CD8-positive, alpha-beta memory T cell (primary cell): ENCODE measurements at regions of chrX and their contacts with region 1.

Region 1: GRCh38 chrX:12946838-12947544 is 27.9 kb upstream of the TMSB4X start:
- DNase-seq: peak; percentile 49 to 79 (median 73)
- H3K4me3 ChIP-seq: peak overlapping the region; percentile 44
- H3K4me3 Mint-ChIP-seq: peak overlapping the region in 6 of 7 donors; percentile 10 to 83 (median 72)
- H3K27ac ChIP-seq: peak overlapping the region; percentile 16
- H3K27ac Mint-ChIP-seq: peak overlapping the region; percentile 82 to 98 (median 95)
- H3K4me1 ChIP-seq: peaks cover 50% of the 10 kb centered on the region
- H3K4me1 Mint-ChIP-seq: peaks cover 53 to 60% (median 56%) of the 10 kb centered on the region in 3 donors
- H3K27me3 ChIP-seq: no peaks in the 10 kb centered on the region
- H3K27me3 Mint-ChIP-seq: peaks cover 0 to 13% of the 10 kb centered on the region in 2 donors

Region 2: DNA sequence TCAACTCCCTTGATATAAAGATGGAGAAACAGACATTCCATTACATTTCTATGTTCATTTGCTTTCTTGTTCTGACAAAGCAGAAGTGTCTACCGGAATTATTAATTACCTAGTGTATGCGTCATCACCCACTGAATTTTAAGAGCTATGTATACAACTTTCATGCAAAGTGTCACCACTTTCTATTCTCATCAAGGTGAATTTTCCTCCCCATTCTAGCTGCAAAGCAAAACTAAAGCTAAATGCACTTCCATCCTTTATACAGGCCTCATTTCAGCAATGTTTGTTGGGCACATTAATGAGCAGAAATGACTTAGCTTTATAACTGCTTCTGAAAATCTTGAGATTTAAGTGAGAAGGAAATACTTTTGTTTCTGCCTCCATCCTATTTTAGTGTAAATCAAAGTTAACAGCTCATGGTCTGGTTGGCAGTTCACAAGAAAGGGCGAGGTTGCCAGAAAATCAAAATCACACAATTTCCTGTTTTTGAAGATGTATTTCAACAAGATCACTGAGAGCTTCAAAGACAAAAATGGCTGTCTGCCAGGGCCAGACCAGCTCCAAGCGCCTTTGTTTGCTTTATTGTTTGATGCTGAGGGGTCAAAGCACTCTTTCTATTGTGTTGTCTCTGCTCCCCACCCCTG is 104.7 kb after region 1 on chrX:
- CTCF ChIA-PET with region 1: interaction called, 10 read pairs
- POLR2A ChIA-PET with region 1: interaction called, 4 read pairs
- DNase-seq: peak in 3 of 5 donors; percentile 46 to 78 (median 58)
- H3K4me3 ChIP-seq: no peak overlapping the region
- H3K4me3 Mint-ChIP-seq: peak overlapping the region; percentile 8 to 69 (median 51)
- H3K27ac ChIP-seq: peak overlapping the region; percentile 21
- H3K27ac Mint-ChIP-seq: peak overlapping the region; percentile 61 to 97 (median 90)
- H3K4me1 ChIP-seq: peaks cover 84% of the 10 kb centered on the region
- H3K4me1 Mint-ChIP-seq: peaks cover 61 to 84% (median 83%) of the 10 kb centered on the region in 3 donors
- H3K27me3 ChIP-seq: no peaks in the 10 kb centered on the region
- H3K27me3 Mint-ChIP-seq: peaks cover 0 to 7% of the 10 kb centered on the region in 2 donors

Region 3: DNA sequence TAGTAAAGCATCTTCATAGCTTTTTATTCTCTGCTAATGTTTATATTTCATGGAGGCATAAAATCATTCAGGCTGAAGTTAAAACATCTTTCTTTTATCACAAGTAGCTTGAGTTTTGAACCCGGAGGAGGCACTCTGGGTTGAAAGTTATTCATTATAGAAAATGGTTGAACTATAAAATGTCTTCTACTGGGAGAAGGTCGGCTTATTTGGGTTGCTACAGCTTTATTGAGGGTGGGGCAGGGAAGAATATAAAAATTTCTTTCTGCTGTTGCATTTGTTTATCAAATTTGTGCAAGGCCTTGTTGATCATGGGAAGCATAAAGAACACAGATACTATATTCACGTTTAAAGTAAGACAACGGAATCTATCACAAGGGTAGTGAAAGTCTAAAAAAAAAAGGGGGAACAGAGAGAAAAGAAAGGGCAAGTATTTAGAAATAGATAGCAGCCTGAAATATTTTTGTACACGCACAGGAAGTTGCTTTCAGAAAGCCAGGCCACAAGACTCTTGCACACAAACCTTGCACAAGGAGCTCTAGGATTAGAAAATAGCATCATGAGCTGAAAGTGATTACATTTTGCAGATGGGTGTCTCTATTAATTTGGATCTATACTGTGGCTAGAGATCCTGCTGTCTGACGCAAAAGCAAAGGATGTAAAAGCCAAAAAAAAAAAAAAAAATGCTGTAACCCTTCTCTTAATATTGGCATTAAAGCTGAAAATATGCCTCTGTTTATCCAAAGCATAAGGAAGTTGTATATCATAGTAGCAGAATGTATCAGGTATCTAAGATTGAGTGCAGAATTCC is 134.6 kb after region 1 on chrX:
- CTCF ChIA-PET with region 1: interaction called, 33 read pairs
- POLR2A ChIA-PET with region 1: interaction called, 5 read pairs
- DNase-seq: peak in 2 of 5 donors; percentile 47
- H3K4me3 ChIP-seq: peak overlapping the region; percentile 5
- H3K4me3 Mint-ChIP-seq: peak overlapping the region; percentile 46 to 74 (median 68)
- H3K27ac ChIP-seq: no peak overlapping the region
- H3K27ac Mint-ChIP-seq: peak overlapping the region; percentile 88 to 98 (median 92)
- H3K4me1 ChIP-seq: peaks cover 98% of the 10 kb centered on the region
- H3K4me1 Mint-ChIP-seq: peaks cover 78 to 95% (median 94%) of the 10 kb centered on the region in 3 donors
- H3K27me3 ChIP-seq: no peaks in the 10 kb centered on the region
- H3K27me3 Mint-ChIP-seq: peaks cover 0 to 28% of the 10 kb centered on the region in 2 donors

Region 4: GRCh38 chrX:13487731-13488523 is 540.9 kb after region 1 on chrX:
- CTCF ChIA-PET with region 1: interaction called, 58 read pairs
- POLR2A ChIA-PET with region 1: interaction called, 10 read pairs
- DNase-seq: peak in 4 of 5 donors; percentile 1 to 52 (median 46)
- H3K4me3 ChIP-seq: no peak overlapping the region
- H3K4me3 Mint-ChIP-seq: peak overlapping the region in 3 of 7 donors; percentile 8 to 31 (median 17)
- H3K27ac ChIP-seq: no peak overlapping the region
- H3K27ac Mint-ChIP-seq: peak overlapping the region in 7 of 8 donors; percentile 50 to 87 (median 79)
- H3K4me1 ChIP-seq: peaks cover 22% of the 10 kb centered on the region
- H3K4me1 Mint-ChIP-seq: peaks cover 38 to 51% (median 50%) of the 10 kb centered on the region in 3 donors
- H3K27me3 ChIP-seq: no peaks in the 10 kb centered on the region
- H3K27me3 Mint-ChIP-seq: peaks cover 0 to 12% of the 10 kb centered on the region in 2 donors

Region 5: DNA sequence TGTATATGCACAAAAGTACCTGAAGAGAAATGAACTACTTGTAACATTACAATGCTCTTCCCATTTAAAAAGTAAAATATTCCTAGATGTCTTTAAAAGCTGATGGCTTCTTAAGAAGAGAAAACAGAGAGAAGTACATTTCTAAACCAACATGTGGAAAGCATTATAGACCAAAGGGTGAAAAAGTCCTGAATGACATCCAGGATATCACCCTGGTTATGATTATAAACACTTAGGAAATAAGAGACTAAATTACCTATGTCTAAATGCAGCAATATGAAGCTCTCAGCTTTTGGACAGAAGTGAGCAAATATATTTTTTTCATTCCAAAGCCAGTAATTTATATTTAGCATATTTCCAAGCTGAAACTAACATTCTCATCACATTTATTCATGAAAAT is 600.7 kb after region 1 on chrX:
- CTCF ChIA-PET with region 1: no interaction called
- POLR2A ChIA-PET with region 1: no interaction called
- DNase-seq: no peak
- H3K4me3 ChIP-seq: no peak overlapping the region
- H3K4me3 Mint-ChIP-seq: no peak overlapping the region
- H3K27ac ChIP-seq: no peak overlapping the region
- H3K27ac Mint-ChIP-seq: no peak overlapping the region
- H3K4me1 ChIP-seq: no peaks in the 10 kb centered on the region
- H3K4me1 Mint-ChIP-seq: no peaks in the 10 kb centered on the region
- H3K27me3 ChIP-seq: no peaks in the 10 kb centered on the region
- H3K27me3 Mint-ChIP-seq: peaks cover 12 to 14% of the 10 kb centered on the region in 2 donors